Astrocyte of the cerebellum (primary cell): ENCODE measurements at regions of chr12 and their contacts with region 1.

Region 1: GRCh38 chr12:53267999-53268647 is at the start of gene ESPL1:
- DNase-seq: peak; percentile 50
- H3K4me3 ChIP-seq: peak within 1 kb of the TSS; percentile 78
- CTCF ChIP-seq: peak; percentile 44

Region 2: DNA sequence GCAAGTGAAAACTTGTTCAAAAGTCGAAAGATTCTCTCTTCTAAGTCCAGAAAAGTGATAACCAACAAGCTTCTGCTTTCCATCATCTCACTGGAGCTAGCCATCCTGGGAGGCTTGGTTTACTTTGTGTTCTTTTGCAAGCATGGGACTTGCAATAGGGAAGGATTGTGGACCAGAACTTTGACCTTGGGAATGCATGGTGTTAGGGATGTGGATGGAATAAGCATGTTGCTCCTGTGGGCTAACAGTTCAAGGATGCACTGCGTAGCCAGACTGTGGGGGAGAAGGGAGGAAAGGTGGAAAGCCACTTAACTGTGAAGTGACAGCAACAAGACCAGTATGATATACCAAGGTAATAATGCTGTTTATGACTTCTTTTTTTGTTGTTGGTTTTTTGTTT is 136.3 kb before region 1 on chr12:
- in situ Hi-C with region 1: loop called (anchors 10 kb)
- DNase-seq: no peak
- H3K4me3 ChIP-seq: no peak overlapping the region
- CTCF ChIP-seq: no peak

Region 3: GRCh38 chr12:53231826-53232645 is 36.1 kb before region 1 on chr12 and contains the start of gene RARG:
- in situ Hi-C with region 1: no loop called
- DNase-seq: no peak
- H3K4me3 ChIP-seq: peak within 1 kb of the TSS; percentile 65
- CTCF ChIP-seq: no peak

Region 4: GRCh38 chr12:53321074-53321814 is 53.1 kb after region 1 on chr12 and contains the start of gene AAAS:
- in situ Hi-C with region 1: no loop called
- DNase-seq: peak; percentile 87
- H3K4me3 ChIP-seq: peak within 1 kb of the TSS; percentile 74
- CTCF ChIP-seq: peak; percentile 99